Lower lobe of right lung (tissue), 2 donors: ENCODE measurements at regions of chr1 and their contacts with region 1.

Region 1: DNA sequence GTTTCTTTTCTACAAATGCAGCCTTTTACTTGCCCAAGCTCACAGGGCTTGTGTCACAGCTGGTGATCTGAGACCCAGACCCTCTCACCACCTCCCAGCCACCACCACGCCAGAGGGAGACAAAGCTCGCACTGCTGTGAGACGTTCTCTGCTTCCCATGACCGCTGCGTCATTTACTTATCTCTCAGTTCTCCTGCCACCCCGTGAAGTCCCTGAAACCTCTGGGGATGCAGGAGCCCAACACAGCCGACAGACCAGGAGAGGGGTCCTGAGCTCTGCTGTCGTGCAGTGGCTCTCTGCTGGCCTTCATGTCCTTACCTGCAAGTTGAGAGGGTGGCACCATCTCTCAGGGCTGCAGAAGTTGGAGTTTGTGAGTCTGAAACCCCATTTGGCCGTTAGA is 77.7 kb downstream of the SLC16A1 start:
- DNase-seq: no peak
- ATAC-seq: no peak
- H3K4me3 ChIP-seq: no peak overlapping the region
- H3K27ac ChIP-seq: no peak overlapping the region
- H3K4me1 ChIP-seq: peaks cover 16% of the 10 kb centered on the region
- H3K27me3 ChIP-seq: no peaks in the 10 kb centered on the region
- CTCF ChIP-seq: no peak

Region 2: GRCh38 chr1:113042285-113043143 is 164.2 kb after region 1 on chr1:
- intact Hi-C with region 1: loop called (anchors 10 kb)
- DNase-seq: peak; percentile 77
- ATAC-seq: peak; percentile 92 to 95
- H3K4me3 ChIP-seq: no peak overlapping the region
- H3K27ac ChIP-seq: no peak overlapping the region
- H3K4me1 ChIP-seq: peaks cover 21% of the 10 kb centered on the region
- H3K27me3 ChIP-seq: no peaks in the 10 kb centered on the region
- CTCF ChIP-seq: peak; percentile 54

Region 3: GRCh38 chr1:113388621-113389355 is 510.5 kb after region 1 on chr1:
- intact Hi-C with region 1: no loop called
- DNase-seq: no peak
- ATAC-seq: no peak
- H3K4me3 ChIP-seq: peak overlapping the region; percentile 89
- H3K27ac ChIP-seq: peak overlapping the region; percentile 89
- H3K4me1 ChIP-seq: peaks cover 11% of the 10 kb centered on the region
- H3K27me3 ChIP-seq: no peaks in the 10 kb centered on the region
- CTCF ChIP-seq: no peak